ENCODE measurements at regions of chr5 and their contacts with region 1.

Region 1: GRCh38 chr5:171850324-171851285 is 65.0 kb downstream of the SMIM23 start:
- DNase-seq: no peak
- H3K4me3 ChIP-seq: no peak overlapping the region
- CTCF ChIP-seq: peak; percentile 39

Region 2: DNA sequence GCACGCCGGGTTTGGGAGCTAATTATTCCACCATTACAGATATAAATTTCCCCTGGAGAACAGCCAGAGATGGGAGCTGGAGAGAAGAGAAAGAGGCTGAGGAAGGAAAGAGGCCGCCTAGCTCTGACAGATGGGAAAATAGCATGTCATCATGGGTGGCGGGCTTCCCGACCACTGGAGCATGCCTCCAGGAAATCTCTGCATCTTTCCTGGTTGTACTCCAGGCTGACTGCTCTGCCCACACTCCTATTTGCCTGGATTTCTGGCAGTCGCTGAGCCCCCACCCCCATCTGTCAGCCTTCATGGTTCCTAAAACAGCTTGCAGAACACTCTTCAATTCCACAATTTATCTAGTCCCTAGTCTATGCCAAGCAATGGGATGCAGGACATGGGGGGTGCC is 1081.4 kb before region 1 on chr5:
- in situ Hi-C with region 1: no loop called
- DNase-seq: no peak
- H3K4me3 ChIP-seq: no peak overlapping the region
- CTCF ChIP-seq: no peak

Region 3: GRCh38 chr5:171418316-171418981 is 432.2 kb before region 1 on chr5:
- in situ Hi-C with region 1: loop called (anchors 25 kb)
- DNase-seq: peak; percentile 72
- H3K4me3 ChIP-seq: peak overlapping the region; percentile 49
- CTCF ChIP-seq: peak; percentile 86

Region 4: GRCh38 chr5:171794470-171794960 is 56.1 kb before region 1 on chr5:
- in situ Hi-C with region 1: loop called (anchors 5 kb)
- DNase-seq: no peak
- H3K4me3 ChIP-seq: no peak overlapping the region
- CTCF ChIP-seq: no peak

Measured in astrocyte of the cerebellum (primary cell).